Activated CD4-positive, alpha-beta memory T cell treated with anti-CD3 and anti-CD28 coated beads for 36 hours (primary cell): ENCODE measurements at regions of chr12 and their contacts with region 1.

Region 1: GRCh38 chr12:1099158-1099557 is 108.1 kb downstream of the ERC1 start:
- DNase-seq: peak; percentile 67
- H3K4me3 Mint-ChIP-seq: no peak overlapping the region
- H3K27ac Mint-ChIP-seq: no peak overlapping the region
- H3K4me1 Mint-ChIP-seq: peaks cover 35% of the 10 kb centered on the region
- H3K27me3 Mint-ChIP-seq: no peaks in the 10 kb centered on the region

Region 2: GRCh38 chr12:1553987-1554982 is 455.1 kb after region 1 on chr12:
- CTCF ChIA-PET with region 1: no interaction called
- POLR2A ChIA-PET with region 1: no interaction called
- intact Hi-C with region 1: loop called (anchors 5 kb)
- DNase-seq: peak; percentile 83
- H3K4me3 Mint-ChIP-seq: no peak overlapping the region
- H3K27ac Mint-ChIP-seq: no peak overlapping the region
- H3K4me1 Mint-ChIP-seq: peaks cover 10% of the 10 kb centered on the region
- H3K27me3 Mint-ChIP-seq: peaks cover 3% of the 10 kb centered on the region